Body of pancreas (tissue), 4 donors: ENCODE measurements at regions of chr7 and their contacts with region 1.

Region 1: GRCh38 chr7:45157653-45158401 is at the start of gene RAMP3:
- DNase-seq: no peak
- ATAC-seq: no peak
- H3K4me3 ChIP-seq: no peak within 1 kb of the TSS
- H3K27ac ChIP-seq: peak within 1 kb of the TSS in 2 of 4 donors; percentile 23 to 25
- H3K4me1 ChIP-seq: no peaks in the 10 kb centered on the region
- H3K27me3 ChIP-seq: no peaks in the 10 kb centered on the region
- CTCF ChIP-seq: no peak
- POLR2A ChIP-seq: no peak
- total RNA-seq, gene RAMP3: 14.0 to 23.1 TPM

Region 2: DNA sequence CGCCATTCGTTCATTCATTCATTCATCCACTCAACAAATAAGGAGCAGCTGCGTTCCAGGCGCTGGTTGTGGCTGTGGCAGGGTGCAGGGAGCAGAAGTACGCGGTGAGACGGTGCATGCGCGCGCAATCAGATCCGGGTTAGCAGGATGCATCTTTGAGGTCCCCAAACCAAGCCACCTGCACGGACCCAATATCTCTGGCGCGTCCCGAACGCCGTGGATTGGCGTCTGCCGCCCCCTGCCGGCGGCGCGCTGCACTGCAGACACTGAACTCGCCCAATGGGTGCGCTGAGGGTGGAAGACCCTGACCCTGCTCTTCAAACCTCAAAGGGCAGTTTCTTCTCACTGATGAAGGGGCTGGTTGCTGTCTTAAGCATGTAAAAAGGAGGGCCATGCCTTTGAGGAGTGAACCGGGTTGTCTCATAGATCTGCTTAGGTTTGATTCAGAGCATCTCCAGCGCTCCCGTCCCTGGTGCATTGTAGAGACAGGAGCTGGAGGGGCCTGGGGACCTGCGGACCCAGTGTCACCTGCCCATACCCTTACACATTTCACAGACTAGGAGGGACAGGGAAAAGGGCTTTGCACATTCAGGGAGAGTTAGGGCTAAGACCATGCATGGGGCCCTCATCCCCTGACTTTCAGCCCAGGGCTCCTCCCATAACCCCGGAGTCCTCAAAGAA is 102.3 kb after region 1 on chr7:
- intact Hi-C with region 1: loop called (anchors 5 kb)
- DNase-seq: peak; percentile 28 to 64 (median 47)
- ATAC-seq: peak; percentile 33
- H3K4me3 ChIP-seq: no peak overlapping the region
- H3K27ac ChIP-seq: no peak overlapping the region
- H3K4me1 ChIP-seq: no peaks in the 10 kb centered on the region
- H3K27me3 ChIP-seq: no peaks in the 10 kb centered on the region
- CTCF ChIP-seq: peak; percentile 68 to 90 (median 82)
- POLR2A ChIP-seq: no peak

Region 3: GRCh38 chr7:45863715-45864114 is 705.9 kb after region 1 on chr7:
- intact Hi-C with region 1: loop called (anchors 5 kb)
- DNase-seq: no peak
- ATAC-seq: no peak
- H3K4me3 ChIP-seq: no peak overlapping the region
- H3K27ac ChIP-seq: no peak overlapping the region
- H3K4me1 ChIP-seq: no peaks in the 10 kb centered on the region
- H3K27me3 ChIP-seq: no peaks in the 10 kb centered on the region
- CTCF ChIP-seq: no peak
- POLR2A ChIP-seq: no peak